ENCODE measurements at regions of chrX and their contacts with region 1.

Region 1: DNA sequence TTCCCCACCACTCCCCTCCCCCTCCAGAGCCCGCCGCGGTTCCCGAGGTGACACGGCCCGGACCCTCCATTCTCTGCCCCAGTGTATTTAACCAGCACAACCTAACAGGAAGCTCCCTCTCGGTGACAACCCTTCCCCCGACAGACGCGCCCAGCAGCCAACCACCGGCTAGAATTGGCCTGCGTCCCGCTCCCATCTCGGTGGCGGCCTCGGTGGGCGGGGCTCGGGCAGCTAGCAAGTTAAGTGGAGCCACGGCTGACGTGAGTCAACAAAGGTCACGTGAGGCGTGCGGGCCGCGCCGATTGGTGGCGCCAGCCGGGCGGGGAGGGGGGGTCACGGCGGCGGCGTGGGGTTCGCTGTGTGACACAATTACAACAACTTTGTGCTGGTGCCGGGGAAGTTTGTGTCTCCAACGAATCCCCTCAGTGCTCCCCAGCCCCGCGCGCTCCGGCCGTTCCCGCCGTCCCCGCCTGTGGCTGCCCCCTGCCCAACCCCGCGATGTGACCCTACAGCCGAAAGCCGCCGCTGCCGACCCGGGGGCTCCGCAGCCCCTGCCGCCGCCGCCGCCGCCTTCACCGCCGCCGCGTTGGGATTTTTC is at the start of gene KDM6A:
- DNase-seq: peak; percentile 98 to 100 (median 99)
- ATAC-seq: peak; percentile 95 to 97
- H3K4me3 ChIP-seq: peak within 1 kb of the TSS; percentile 89
- H3K27ac ChIP-seq: peak within 1 kb of the TSS; percentile 95
- H3K4me1 ChIP-seq: peaks cover 2% of the 10 kb centered on the region
- H3K27me3 ChIP-seq: no peaks in the 10 kb centered on the region
- total RNA-seq, gene KDM6A: 12.9 to 20.0 (median 15.5) TPM

Region 2: GRCh38 chrX:44974422-44974821 is 101.5 kb after region 1 on chrX:
- intact Hi-C with region 1: loop called in 1 of 4 experiments (anchors 10 kb)
- DNase-seq: no peak
- ATAC-seq: no peak
- H3K4me3 ChIP-seq: no peak overlapping the region
- H3K27ac ChIP-seq: no peak overlapping the region
- H3K4me1 ChIP-seq: no peaks in the 10 kb centered on the region
- H3K27me3 ChIP-seq: no peaks in the 10 kb centered on the region

Region 3: DNA sequence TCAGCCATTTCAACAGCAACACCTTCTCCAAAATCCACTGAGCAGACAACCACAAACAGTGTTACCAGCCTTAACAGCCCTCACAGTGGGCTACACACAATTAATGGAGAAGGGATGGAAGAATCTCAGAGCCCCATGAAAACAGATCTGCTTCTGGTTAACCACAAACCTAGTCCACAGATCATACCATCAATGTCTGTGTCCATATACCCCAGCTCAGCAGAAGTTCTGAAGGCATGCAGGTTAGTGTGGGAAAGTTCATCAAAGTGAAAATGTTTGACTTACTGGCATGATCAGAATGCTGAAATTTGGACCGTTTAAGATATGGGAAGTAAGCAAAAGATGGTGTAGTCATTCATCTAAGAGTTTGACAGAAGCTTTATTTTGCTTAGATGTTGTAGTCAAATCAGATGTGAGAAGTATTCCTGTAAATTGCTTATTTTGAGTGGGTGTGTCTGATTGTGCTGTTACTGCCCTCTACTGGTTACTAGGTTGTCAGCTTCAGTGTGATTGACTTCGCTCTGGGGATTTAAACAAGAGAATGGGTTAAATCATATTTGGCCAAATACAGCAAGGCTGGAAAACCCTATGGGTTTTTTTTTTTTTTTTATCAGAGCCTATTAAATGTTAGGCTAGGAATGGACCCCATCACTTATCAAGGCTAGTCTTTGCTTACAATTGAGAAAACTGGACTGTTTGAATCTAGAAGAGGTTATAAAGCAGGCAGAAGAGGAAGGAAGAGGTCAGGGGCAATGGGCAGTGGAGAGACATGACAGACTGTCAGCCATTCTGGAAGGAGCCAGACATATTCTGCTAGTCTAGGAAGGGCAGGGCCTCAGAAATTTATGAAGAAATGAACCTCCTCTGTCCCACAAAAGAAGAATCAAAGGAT is 197.4 kb after region 1 on chrX:
- intact Hi-C with region 1: loop called in 3 of 4 experiments (anchors 5 to 10 kb)
- DNase-seq: no peak
- ATAC-seq: peak in 1 of 2 donors; percentile 70
- H3K4me3 ChIP-seq: no peak overlapping the region
- H3K27ac ChIP-seq: no peak overlapping the region
- H3K4me1 ChIP-seq: no peaks in the 10 kb centered on the region
- H3K27me3 ChIP-seq: no peaks in the 10 kb centered on the region

Measured in right cardiac atrium (tissue), 5 donors.